Activated B cell treated with CpG ODN at 0.5 μM for 24 hours (primary cell): ENCODE measurements at regions of chr11 and their contacts with region 1.

Region 1: DNA sequence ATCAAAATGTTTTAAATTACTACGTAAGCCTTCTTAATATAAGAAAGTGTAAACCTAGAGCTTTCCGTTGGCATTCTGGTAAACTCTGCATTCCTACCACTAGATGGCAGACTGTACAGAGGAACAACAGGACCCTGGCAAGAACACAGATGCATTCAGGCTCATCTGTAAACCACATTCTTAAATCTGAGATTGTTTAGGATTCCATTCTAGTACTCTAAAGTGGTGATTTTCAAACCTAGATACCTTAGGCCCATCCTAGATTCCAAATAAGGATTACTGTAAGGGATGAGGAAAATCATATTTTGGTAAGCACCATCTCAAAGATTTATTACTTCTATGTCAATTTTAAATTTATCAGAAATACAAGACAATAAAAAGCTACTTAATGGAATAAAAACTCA is 26.9 kb downstream of the PICALM start:
- DNase-seq: no peak
- ATAC-seq: peak; percentile 91
- H3K4me3 Mint-ChIP-seq: peak overlapping the region; percentile 6
- H3K27ac Mint-ChIP-seq: peak overlapping the region; percentile 19
- H3K4me1 Mint-ChIP-seq: peaks cover 71% of the 10 kb centered on the region
- H3K27me3 Mint-ChIP-seq: no peaks in the 10 kb centered on the region
- CTCF ChIP-seq: no peak

Region 2: DNA sequence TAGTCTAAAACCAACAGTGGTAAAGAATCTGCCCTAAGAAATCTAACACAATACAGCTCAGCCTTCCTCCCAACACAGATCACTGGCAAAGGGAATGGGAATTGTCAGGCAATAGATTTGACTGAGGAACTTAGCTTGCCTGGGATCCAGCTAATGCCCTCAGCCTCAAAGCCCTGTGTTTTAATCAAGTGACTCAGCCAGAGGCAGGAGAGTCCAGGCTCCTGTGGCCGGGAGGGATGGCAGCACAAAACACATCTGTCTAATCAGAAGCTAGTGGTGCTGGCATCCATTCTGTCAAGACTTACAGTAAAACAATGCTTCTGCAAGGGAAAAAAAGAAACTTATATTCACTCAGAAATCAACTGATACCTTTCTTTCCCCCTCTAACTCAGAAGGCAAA is 236.6 kb before region 1 on chr11:
- CTCF ChIA-PET with region 1: no interaction called
- POLR2A ChIA-PET with region 1: no interaction called
- intact Hi-C with region 1: no loop called
- DNase-seq: no peak
- ATAC-seq: no peak
- H3K4me3 Mint-ChIP-seq: no peak overlapping the region
- H3K27ac Mint-ChIP-seq: no peak overlapping the region
- H3K4me1 Mint-ChIP-seq: peaks cover 14% of the 10 kb centered on the region
- H3K27me3 Mint-ChIP-seq: peaks cover 5% of the 10 kb centered on the region
- CTCF ChIP-seq: no peak

Region 3: DNA sequence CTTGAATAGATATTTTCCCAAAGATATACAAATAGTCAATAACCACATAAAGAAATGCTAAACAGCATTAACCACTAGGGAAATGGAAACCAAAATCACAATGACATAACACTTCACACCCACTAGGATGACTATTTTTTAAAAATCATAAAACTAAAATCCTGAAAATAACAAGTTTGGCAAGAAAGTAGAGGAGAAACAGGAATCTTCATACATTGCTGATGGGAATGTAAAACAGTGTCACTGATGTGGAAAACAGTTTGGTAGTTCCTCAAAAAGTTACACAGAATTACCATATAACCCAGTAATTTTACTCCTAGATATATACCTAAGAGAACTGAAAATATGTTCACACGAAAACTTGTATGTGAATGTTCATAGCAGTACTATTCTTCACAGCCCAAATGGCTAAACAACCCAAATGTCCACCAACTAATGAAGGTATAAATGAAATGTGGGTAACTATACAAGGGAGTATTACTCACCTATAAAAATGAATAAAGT is 14.4 kb after region 1 on chr11:
- CTCF ChIA-PET with region 1: interaction called, 7 read pairs
- POLR2A ChIA-PET with region 1: interaction called, 10 read pairs
- intact Hi-C with region 1: loop called (anchors 1 kb)
- DNase-seq: no peak
- ATAC-seq: no peak
- H3K4me3 Mint-ChIP-seq: no peak overlapping the region
- H3K27ac Mint-ChIP-seq: peak overlapping the region; percentile 30
- H3K4me1 Mint-ChIP-seq: peaks cover 92% of the 10 kb centered on the region
- H3K27me3 Mint-ChIP-seq: no peaks in the 10 kb centered on the region
- CTCF ChIP-seq: no peak

Region 4: GRCh38 chr11:86116386-86116726 is 74.4 kb after region 1 on chr11:
- CTCF ChIA-PET with region 1: interaction called, 11 read pairs
- POLR2A ChIA-PET with region 1: no interaction called
- intact Hi-C with region 1: loop called (anchors 2 kb)
- DNase-seq: no peak
- ATAC-seq: peak; percentile 95
- H3K4me3 Mint-ChIP-seq: peak overlapping the region; percentile 46
- H3K27ac Mint-ChIP-seq: peak overlapping the region; percentile 87
- H3K4me1 Mint-ChIP-seq: peaks cover 21% of the 10 kb centered on the region
- H3K27me3 Mint-ChIP-seq: no peaks in the 10 kb centered on the region
- CTCF ChIP-seq: no peak

Region 5: DNA sequence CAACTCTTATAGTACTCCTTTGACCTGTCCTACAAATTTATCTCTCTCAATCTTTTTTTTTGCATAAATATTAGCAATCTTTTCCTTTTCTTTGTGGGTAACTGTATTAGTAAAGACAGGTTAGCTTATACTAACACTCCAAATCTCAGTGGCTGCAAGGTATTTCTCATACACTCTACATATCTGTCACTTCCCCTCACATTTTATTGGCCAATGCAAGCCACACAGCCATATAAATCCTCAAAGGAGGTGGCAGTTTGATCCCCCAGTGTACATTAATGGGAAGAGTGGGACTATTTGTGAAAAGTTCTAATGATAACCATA is 160.0 kb after region 1 on chr11:
- CTCF ChIA-PET with region 1: interaction called, 87 read pairs
- POLR2A ChIA-PET with region 1: no interaction called
- intact Hi-C with region 1: loop called (anchors 1 kb)
- DNase-seq: no peak
- ATAC-seq: peak; percentile 46
- H3K4me3 Mint-ChIP-seq: no peak overlapping the region
- H3K27ac Mint-ChIP-seq: no peak overlapping the region
- H3K4me1 Mint-ChIP-seq: peaks cover 9% of the 10 kb centered on the region
- H3K27me3 Mint-ChIP-seq: no peaks in the 10 kb centered on the region
- CTCF ChIP-seq: no peak

Region 6: DNA sequence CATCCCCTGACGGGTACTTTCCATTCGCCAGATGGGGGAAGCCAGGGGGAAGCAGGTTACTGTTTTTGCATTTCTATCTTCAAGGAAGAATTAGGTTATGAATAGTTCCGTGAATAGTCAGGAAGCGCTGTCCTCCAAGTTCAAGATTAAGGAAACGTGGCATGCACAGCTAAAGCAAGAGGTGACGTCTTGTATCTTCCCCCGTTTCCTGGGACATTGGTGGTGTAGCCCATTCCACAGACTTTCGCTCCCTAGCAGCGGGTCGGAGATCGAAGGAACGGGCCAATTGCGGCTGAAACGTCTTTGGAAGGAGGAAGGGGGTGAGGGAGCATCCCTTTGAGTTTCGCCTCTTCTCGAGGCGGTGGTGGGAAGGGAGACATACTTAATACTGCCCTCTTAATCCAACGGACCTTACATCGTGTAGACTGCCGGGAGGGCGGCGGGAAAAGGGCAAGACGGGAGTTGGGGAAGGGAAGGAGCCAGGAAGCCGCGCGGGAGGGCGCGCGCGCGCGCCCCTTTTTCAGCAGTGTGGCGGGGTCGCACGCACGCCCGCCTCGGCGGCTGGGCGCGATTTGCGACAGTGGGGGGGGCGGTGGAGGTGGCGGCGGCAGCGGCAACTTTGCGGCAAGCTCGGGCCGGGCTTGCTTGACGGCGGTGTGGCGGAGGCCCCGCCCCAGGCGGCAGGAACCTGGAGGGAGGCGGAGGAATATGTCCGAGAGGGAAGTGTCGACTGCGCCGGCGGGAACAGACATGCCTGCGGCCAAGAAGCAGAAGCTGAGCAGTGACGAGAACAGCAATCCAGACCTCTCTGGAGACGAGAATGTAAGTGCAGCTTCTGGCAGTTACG is 202.8 kb after region 1 on chr11 and contains the start of gene EED:
- CTCF ChIA-PET with region 1: interaction called, 6 read pairs
- POLR2A ChIA-PET with region 1: interaction called, 5 read pairs
- intact Hi-C with region 1: loop called (anchors 1 kb)
- DNase-seq: peak; percentile 90
- ATAC-seq: peak; percentile 87
- H3K4me3 Mint-ChIP-seq: no peak within 1 kb of the TSS
- H3K27ac Mint-ChIP-seq: no peak within 1 kb of the TSS
- H3K4me1 Mint-ChIP-seq: peaks cover 31% of the 10 kb centered on the region
- H3K27me3 Mint-ChIP-seq: no peaks in the 10 kb centered on the region
- CTCF ChIP-seq: no peak
- total RNA-seq, gene EED: 55.2 and 63.7 TPM in 2 replicates